Activated T-helper 1 cell treated with anti-CD3 and anti-CD28 coated beads, Interleukin-12 subunit alpha, Interleukin-12 subunit beta, Interleukin-2, Interleukin-4 antibody, amounts not matched to agents 30 ng/mL and 10 ng/mL and 1 ng/mL, durations not matched to agents 14 hours and 24 hours and 36 hours (primary cell): ENCODE measurements at regions of chr15 and their contacts with region 1.

Region 1: GRCh38 chr15:48877630-48878595 is at the start of gene EID1:
- DNase-seq: peak; percentile 94
- H3K4me3 Mint-ChIP-seq: peak within 1 kb of the TSS; percentile 99
- H3K27ac Mint-ChIP-seq: peak within 1 kb of the TSS; percentile 97
- H3K4me1 Mint-ChIP-seq: peaks cover 69% of the 10 kb centered on the region
- H3K27me3 Mint-ChIP-seq: no peaks in the 10 kb centered on the region
- total RNA-seq, gene EID1: 177 and 183 TPM in 2 replicates

Region 2: GRCh38 chr15:48330855-48331795 is 546.8 kb before region 1 on chr15 and contains the start of gene DUT:
- intact Hi-C with region 1: loop called (anchors 5 kb)
- DNase-seq: peak; percentile 81
- H3K4me3 Mint-ChIP-seq: peak within 1 kb of the TSS; percentile 100
- H3K27ac Mint-ChIP-seq: peak within 1 kb of the TSS; percentile 99
- H3K4me1 Mint-ChIP-seq: peaks cover 46% of the 10 kb centered on the region
- H3K27me3 Mint-ChIP-seq: no peaks in the 10 kb centered on the region
- total RNA-seq, gene DUT: 244 and 252 TPM in 2 replicates

Region 3: DNA sequence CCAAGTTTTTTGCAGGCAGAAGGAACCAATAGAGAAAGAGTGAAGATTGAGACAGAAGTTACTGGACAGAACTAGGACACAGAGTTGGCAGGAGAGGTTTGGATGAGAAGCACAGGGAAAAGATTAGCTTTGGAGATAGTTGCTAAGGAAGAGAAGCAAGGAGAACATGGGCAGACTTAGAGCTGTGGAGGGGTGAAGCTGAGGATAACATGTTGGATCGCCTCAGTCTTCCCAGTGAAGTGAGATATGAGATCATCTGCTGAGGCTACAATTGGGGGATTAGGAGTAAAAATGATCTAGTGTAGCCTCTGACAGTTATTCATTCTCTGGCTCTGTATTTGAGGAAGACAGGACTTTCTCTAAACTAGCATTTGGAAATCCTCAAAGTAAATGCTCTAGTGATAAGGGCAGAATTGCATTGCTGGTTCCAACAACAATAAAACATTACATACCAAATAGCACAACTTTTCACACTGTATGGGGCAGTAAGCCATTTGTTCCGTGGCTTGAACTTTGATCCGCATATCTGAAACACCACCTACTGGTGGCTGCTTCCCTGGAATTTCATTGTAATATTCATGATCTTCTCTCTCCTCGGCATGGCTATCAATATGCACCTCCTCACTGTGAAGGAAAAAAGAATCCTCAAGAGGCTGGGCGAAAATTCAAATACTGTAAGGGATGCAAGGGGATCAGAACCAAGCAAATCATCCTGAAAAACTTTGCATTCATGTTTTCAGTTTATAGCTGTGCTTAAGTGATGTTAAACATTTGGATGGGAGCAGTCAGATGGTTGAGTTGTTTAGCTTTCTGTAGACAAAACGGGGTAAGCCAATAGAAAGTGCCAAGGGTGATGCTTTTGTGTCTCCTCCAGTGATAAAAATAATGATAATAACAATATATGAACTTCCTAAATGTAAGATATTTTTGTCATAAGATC is 22.1 kb before region 1 on chr15:
- intact Hi-C with region 1: no loop called
- DNase-seq: no peak
- H3K4me3 Mint-ChIP-seq: no peak overlapping the region
- H3K27ac Mint-ChIP-seq: no peak overlapping the region
- H3K4me1 Mint-ChIP-seq: peaks cover 9% of the 10 kb centered on the region
- H3K27me3 Mint-ChIP-seq: peaks cover 15% of the 10 kb centered on the region

Region 4: GRCh38 chr15:48896869-48897814 is 19.2 kb after region 1 on chr15:
- intact Hi-C with region 1: loop called (anchors 1 kb)
- DNase-seq: no peak
- H3K4me3 Mint-ChIP-seq: peak overlapping the region; percentile 35
- H3K27ac Mint-ChIP-seq: peak overlapping the region; percentile 74
- H3K4me1 Mint-ChIP-seq: peaks cover 33% of the 10 kb centered on the region
- H3K27me3 Mint-ChIP-seq: peaks cover 5% of the 10 kb centered on the region

Region 5: GRCh38 chr15:48963524-48964113 is 85.7 kb after region 1 on chr15 and contains the start of gene SHC4:
- intact Hi-C with region 1: loop called (anchors 1 kb)
- DNase-seq: no peak
- H3K4me3 Mint-ChIP-seq: peak within 1 kb of the TSS; percentile 84
- H3K27ac Mint-ChIP-seq: peak within 1 kb of the TSS; percentile 82
- H3K4me1 Mint-ChIP-seq: peaks cover 64% of the 10 kb centered on the region
- H3K27me3 Mint-ChIP-seq: peaks cover 11% of the 10 kb centered on the region
- total RNA-seq, gene SHC4: 25.7 and 26.4 TPM in 2 replicates

Region 6: GRCh38 chr15:49046220-49047102 is 168.5 kb after region 1 on chr15 and contains the start of gene SECISBP2L:
- intact Hi-C with region 1: loop called (anchors 1 kb)
- DNase-seq: peak; percentile 87
- H3K4me3 Mint-ChIP-seq: peak within 1 kb of the TSS; percentile 96
- H3K27ac Mint-ChIP-seq: peak within 1 kb of the TSS; percentile 91
- H3K4me1 Mint-ChIP-seq: peaks cover 35% of the 10 kb centered on the region
- H3K27me3 Mint-ChIP-seq: no peaks in the 10 kb centered on the region
- total RNA-seq, gene SECISBP2L: 38.0 and 44.8 TPM in 2 replicates